ENCODE measurements at regions of chr11 and their contacts with region 1.

Region 1: GRCh38 chr11:36492724-36493304 is 17.3 kb downstream of the TRAF6 start:
- DNase-seq: peak; percentile 68
- H3K4me3 ChIP-seq: no peak overlapping the region
- H3K27ac ChIP-seq: no peak overlapping the region
- H3K4me1 ChIP-seq: peaks cover 10% of the 10 kb centered on the region
- H3K27me3 ChIP-seq: no peaks in the 10 kb centered on the region
- CTCF ChIP-seq: peak; percentile 63 to 66
- POLR2A ChIP-seq: no peak

Region 2: GRCh38 chr11:36123346-36124101 is 369.3 kb before region 1 on chr11:
- CTCF ChIA-PET with region 1: no interaction called
- POLR2A ChIA-PET with region 1: no interaction called
- dilution Hi-C with region 1: no loop called
- intact Hi-C with region 1: no loop called
- DNase-seq: no peak
- H3K4me3 ChIP-seq: no peak overlapping the region
- H3K27ac ChIP-seq: no peak overlapping the region
- H3K4me1 ChIP-seq: peaks cover 16% of the 10 kb centered on the region
- H3K27me3 ChIP-seq: no peaks in the 10 kb centered on the region
- CTCF ChIP-seq: no peak
- POLR2A ChIP-seq: no peak

Region 3: DNA sequence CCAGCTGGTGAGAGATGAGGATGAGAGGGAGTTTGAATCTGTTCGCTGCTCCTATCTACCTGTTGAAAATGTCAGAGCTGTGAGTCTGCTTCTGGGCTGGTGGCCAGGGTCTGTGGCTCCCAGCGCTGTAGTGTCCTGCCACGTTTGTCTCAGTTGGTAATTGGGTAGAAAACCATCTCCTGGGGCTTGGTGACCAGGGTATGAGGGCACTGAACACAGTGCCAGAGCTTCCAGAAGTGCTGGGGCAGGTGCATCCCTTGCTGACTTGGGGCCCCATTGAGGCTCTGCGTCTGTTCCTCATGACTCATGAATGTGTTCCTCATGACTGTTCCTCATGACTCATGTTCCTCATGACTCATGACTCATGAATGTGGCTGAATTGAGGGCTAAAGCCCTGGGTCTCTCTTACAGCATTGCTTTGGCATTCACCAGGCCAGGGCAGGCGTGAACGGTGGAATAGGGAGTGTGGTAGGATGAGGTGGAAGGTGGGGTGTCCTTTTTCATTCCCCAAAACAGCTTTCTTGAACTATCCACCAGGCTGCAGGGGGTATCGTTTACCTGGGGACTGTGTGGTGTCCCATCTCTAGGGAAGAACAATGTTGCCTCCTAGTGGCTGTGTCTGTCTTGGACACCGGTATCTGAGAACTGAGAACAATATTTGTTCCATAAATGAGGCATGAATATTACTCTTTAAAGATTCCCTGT is 343.1 kb before region 1 on chr11:
- CTCF ChIA-PET with region 1: interaction called, 3 read pairs
- POLR2A ChIA-PET with region 1: no interaction called
- dilution Hi-C with region 1: no loop called
- intact Hi-C with region 1: loop called (anchors 10 kb)
- DNase-seq: peak; percentile 99
- H3K4me3 ChIP-seq: no peak overlapping the region
- H3K27ac ChIP-seq: peak overlapping the region; percentile 93
- H3K4me1 ChIP-seq: peaks cover 25% of the 10 kb centered on the region
- H3K27me3 ChIP-seq: no peaks in the 10 kb centered on the region
- CTCF ChIP-seq: peak; percentile 43 to 50
- POLR2A ChIP-seq: peak; percentile 64

Region 4: GRCh38 chr11:36289226-36289852 is 203.5 kb before region 1 on chr11 and contains the start of gene COMMD9:
- CTCF ChIA-PET with region 1: interaction called, 167 read pairs
- POLR2A ChIA-PET with region 1: interaction called, 3 read pairs
- dilution Hi-C with region 1: no loop called
- intact Hi-C with region 1: loop called (anchors 1 kb)
- DNase-seq: peak; percentile 93
- H3K4me3 ChIP-seq: peak within 1 kb of the TSS; percentile 73 to 95 (median 75)
- H3K27ac ChIP-seq: peak within 1 kb of the TSS; percentile 32
- H3K4me1 ChIP-seq: peaks cover 9% of the 10 kb centered on the region
- H3K27me3 ChIP-seq: no peaks in the 10 kb centered on the region
- CTCF ChIP-seq: no peak
- POLR2A ChIP-seq: peak; percentile 77
- total RNA-seq, gene COMMD9: 78.9 and 79.0 TPM in 2 replicates

Region 5: DNA sequence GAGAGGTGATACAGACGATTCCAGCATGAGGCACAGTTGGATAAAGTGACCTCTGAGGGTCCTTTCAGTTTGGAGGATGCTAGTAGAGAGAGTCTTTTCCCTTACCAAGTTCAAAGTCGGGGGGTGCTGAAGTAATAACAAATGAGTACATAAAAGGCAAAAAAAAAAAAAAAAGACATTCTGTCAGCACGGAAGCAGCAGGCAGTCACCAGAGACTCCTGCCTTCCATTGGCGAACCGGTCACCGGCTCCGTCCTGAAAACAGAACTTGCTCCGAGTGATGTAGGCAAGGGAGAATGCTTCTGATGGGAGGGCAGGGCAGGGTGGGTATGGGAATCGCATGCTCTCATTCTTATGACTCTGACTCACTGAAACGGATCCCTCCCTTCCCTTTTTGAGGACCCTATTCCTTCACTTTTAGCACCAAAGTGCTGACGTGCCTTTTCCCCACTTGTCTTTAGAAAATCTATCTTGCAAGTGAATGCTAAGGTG is 130.9 kb before region 1 on chr11:
- CTCF ChIA-PET with region 1: interaction called, 14 read pairs
- POLR2A ChIA-PET with region 1: no interaction called
- dilution Hi-C with region 1: no loop called
- intact Hi-C with region 1: no loop called
- DNase-seq: no peak
- H3K4me3 ChIP-seq: no peak overlapping the region
- H3K27ac ChIP-seq: no peak overlapping the region
- H3K4me1 ChIP-seq: peaks cover 16% of the 10 kb centered on the region
- H3K27me3 ChIP-seq: peaks cover 5 to 8% of the 10 kb centered on the region in 2 experiments
- CTCF ChIP-seq: no peak
- POLR2A ChIP-seq: no peak

Region 6: GRCh38 chr11:36478700-36479329 is 14.0 kb before region 1 on chr11:
- CTCF ChIA-PET with region 1: interaction called, 77 read pairs
- POLR2A ChIA-PET with region 1: no interaction called
- dilution Hi-C with region 1: no loop called
- intact Hi-C with region 1: no loop called
- DNase-seq: peak; percentile 60
- H3K4me3 ChIP-seq: no peak overlapping the region
- H3K27ac ChIP-seq: no peak overlapping the region
- H3K4me1 ChIP-seq: no peaks in the 10 kb centered on the region
- H3K27me3 ChIP-seq: no peaks in the 10 kb centered on the region
- CTCF ChIP-seq: peak; percentile 47 to 50
- POLR2A ChIP-seq: no peak

Region 7: DNA sequence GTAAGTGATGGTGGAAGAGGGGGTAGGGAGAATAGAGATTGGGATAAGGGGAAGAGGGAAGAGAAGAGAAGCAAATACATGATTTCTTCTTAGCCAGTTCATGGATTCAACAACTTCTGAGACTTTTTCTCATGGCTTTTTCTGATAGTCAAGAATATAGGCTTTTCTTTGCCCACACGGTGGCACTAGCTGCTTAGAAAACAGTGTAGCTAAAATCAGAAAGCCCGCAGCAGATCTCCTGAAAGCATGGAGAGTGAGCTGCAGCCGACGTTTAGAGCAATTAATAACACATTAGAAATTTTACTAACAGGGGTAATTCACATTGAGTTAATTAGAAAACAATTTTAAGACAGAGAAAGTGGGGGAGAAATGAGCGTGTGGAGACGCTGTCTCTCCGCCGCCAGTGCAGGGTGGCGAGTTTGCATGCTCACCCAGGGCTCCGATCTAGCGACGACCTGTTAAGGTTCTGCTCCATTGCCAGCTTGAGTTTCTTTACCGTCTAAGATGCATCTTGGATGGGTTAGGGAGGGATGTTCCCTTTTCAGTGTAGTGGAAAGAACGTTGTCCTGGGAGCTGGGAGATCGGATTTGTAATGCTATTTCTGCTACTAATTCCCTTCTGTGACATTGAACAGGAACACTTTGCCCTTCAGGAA is 71.7 kb after region 1 on chr11:
- CTCF ChIA-PET with region 1: interaction called, 13 read pairs
- POLR2A ChIA-PET with region 1: no interaction called
- dilution Hi-C with region 1: no loop called
- intact Hi-C with region 1: no loop called
- DNase-seq: peak; percentile 64
- H3K4me3 ChIP-seq: no peak overlapping the region
- H3K27ac ChIP-seq: no peak overlapping the region
- H3K4me1 ChIP-seq: no peaks in the 10 kb centered on the region
- H3K27me3 ChIP-seq: peaks cover 4 to 27% of the 10 kb centered on the region in 2 experiments
- CTCF ChIP-seq: peak; percentile 42 to 54
- POLR2A ChIP-seq: no peak